Psoas muscle (tissue), 8 donors: ENCODE measurements at regions of chr4 and their contacts with region 1.

Region 1: DNA sequence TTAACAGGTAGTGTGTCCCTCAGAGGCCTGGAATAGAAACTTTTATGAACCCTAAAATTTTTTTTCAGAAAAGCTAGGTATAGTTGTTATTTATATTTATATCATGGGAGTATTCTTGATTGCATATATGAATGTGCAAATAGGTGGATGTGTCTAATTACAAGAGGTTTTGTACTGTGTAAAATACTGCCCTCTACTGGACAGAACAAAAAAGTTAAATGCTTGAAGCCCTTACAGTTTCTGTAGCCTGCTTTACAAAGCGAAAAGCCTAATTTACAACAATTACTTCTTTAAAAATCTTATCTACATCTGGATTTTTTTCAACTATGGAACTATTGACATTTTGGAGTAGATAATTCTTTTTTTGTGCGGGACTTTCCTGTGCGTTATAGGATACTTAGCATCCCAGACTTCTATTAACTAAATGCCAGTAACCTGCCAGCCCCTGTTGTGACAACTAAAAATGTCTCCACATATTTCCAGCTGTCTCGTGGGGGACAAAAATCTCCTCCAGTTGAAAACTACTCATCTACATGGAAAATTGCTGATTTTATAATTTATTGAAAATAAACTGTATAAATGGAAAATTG is 35.1 kb downstream of the ENPEP start:
- DNase-seq: no peak
- ATAC-seq: peak; percentile 64 to 88 (median 78)
- H3K4me3 ChIP-seq: no peak overlapping the region
- H3K27ac ChIP-seq: no peak overlapping the region
- H3K4me1 ChIP-seq: no peaks in the 10 kb centered on the region
- H3K27me3 ChIP-seq: no peaks in the 10 kb centered on the region
- CTCF ChIP-seq: peak; percentile 80

Region 2: DNA sequence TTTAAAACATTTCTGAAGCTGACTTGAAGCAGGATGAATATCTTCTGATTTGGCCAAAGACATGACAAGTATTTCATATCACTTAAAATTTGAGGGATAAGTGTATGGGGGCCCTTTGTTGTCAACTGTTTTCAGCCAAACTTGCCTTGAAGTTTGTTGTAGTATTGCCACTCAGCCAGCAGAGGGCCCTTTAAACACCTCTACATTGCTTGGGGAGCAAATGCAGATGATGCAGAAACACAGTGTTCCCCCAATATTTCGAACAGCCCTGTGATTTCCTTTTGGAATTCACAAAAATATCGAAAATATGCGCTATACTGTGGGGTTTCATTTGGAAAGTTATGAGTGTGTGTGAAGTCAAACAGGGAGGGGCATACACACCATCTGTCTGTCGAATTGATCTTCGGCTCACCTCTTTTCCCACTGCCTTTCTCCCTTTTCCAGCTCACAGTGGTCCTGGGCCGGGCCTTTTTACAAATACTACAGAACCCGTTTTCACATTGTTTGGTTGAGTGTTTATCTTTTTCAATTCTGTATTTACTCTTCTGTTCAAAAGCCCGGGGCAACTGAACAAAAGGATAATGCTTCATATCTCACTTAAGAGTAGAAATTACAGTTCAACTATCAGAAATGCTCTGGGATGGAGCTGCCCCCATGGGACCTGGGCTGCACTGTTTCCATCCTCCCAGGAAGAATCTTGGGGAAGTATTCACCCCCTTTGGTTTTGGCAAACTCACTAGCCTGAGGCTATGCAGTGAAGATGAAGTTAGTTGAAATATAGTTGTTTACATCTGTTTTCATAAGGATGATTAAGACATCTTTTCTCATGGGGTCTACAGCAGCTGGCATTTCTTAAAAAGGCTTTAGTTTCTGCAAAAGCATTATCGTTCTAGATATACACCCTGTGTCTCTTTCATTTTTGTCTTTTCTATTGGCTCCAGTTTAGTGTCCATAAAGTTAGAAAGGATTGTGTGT is 460.8 kb before region 1 on chr4:
- intact Hi-C with region 1: loop called in 1 of 2 experiments (anchors 5 kb)
- DNase-seq: no peak
- ATAC-seq: peak in 1 of 4 donors; percentile 65
- H3K4me3 ChIP-seq: no peak overlapping the region
- H3K27ac ChIP-seq: no peak overlapping the region
- H3K4me1 ChIP-seq: no peaks in the 10 kb centered on the region
- H3K27me3 ChIP-seq: no peaks in the 10 kb centered on the region
- CTCF ChIP-seq: peak; percentile 76

Region 3: GRCh38 chr4:110310795-110311194 is 200.3 kb before region 1 on chr4:
- intact Hi-C with region 1: loop called (anchors 5 to 10 kb)
- DNase-seq: no peak
- ATAC-seq: no peak
- H3K4me3 ChIP-seq: no peak overlapping the region
- H3K27ac ChIP-seq: no peak overlapping the region
- H3K4me1 ChIP-seq: no peaks in the 10 kb centered on the region
- H3K27me3 ChIP-seq: no peaks in the 10 kb centered on the region
- CTCF ChIP-seq: no peak

Region 4: DNA sequence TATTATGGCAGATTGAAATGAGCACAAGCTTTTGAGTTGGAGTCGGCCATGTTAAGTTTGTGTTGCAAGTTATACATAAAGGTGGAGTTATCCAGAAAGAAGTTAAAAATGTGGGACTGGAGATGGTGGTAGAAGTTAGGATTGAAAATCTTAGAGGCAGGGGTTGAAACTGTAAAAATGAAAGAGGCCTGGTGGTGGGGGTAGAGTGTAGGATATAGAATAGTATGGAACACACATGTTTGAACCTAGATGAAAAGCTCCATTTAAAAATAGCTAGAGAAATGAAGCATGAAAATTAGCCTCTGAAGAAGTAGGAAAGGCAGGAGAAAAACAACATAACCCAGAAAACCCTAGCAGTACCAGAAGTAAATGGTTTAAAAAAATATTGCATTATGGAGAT is 166.9 kb before region 1 on chr4:
- intact Hi-C with region 1: loop called (anchors 2 to 5 kb)
- DNase-seq: no peak
- ATAC-seq: peak in 1 of 4 donors; percentile 67
- H3K4me3 ChIP-seq: no peak overlapping the region
- H3K27ac ChIP-seq: no peak overlapping the region
- H3K4me1 ChIP-seq: no peaks in the 10 kb centered on the region
- H3K27me3 ChIP-seq: no peaks in the 10 kb centered on the region
- CTCF ChIP-seq: peak; percentile 25

Region 5: DNA sequence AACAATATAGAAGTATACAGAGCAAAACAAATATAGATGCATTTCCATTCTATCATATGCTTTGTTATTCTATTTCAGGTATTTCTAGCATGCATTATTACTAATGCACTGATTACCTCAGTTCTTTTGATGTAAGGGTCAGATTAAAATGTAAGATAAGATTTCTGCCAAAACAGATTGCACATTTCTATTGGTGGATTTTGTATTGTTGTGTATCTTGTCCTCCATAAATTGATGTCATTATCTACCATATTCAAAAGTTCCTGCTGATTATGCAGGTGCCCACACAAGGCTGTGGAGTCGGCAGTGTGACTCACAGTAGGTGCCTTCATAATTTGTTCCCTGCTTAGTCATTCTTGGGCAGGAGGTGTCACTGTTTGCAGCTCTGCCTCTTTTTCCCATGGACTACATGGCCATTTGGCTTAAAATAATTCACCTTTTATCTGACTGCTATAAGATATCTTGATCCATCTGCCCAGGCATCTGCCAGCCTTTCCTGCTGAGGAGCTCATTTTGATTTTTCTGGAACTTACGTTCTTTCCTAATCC is 68.8 kb before region 1 on chr4:
- intact Hi-C with region 1: loop called (anchors 5 kb)
- DNase-seq: no peak
- ATAC-seq: peak; percentile 47 to 91 (median 84)
- H3K4me3 ChIP-seq: no peak overlapping the region
- H3K27ac ChIP-seq: no peak overlapping the region
- H3K4me1 ChIP-seq: no peaks in the 10 kb centered on the region
- H3K27me3 ChIP-seq: no peaks in the 10 kb centered on the region
- CTCF ChIP-seq: peak; percentile 33

Region 6: GRCh38 chr4:110449947-110450346 is 61.1 kb before region 1 on chr4:
- intact Hi-C with region 1: loop called in 1 of 2 experiments (anchors 5 kb)
- DNase-seq: no peak
- ATAC-seq: peak in 2 of 4 donors; percentile 54 to 61
- H3K4me3 ChIP-seq: no peak overlapping the region
- H3K27ac ChIP-seq: no peak overlapping the region
- H3K4me1 ChIP-seq: no peaks in the 10 kb centered on the region
- H3K27me3 ChIP-seq: no peaks in the 10 kb centered on the region
- CTCF ChIP-seq: no peak